ENCODE measurements at regions of chr12 and their contacts with region 1.

Region 1: GRCh38 chr12:122356192-122356635 is 66.3 kb downstream of the CLIP1 start:
- DNase-seq: peak; percentile 74
- ATAC-seq: peak; percentile 86
- H3K4me3 Mint-ChIP-seq: no peak overlapping the region
- H3K27ac Mint-ChIP-seq: no peak overlapping the region
- H3K4me1 Mint-ChIP-seq: peaks cover 16% of the 10 kb centered on the region
- H3K27me3 Mint-ChIP-seq: no peaks in the 10 kb centered on the region

Region 2: DNA sequence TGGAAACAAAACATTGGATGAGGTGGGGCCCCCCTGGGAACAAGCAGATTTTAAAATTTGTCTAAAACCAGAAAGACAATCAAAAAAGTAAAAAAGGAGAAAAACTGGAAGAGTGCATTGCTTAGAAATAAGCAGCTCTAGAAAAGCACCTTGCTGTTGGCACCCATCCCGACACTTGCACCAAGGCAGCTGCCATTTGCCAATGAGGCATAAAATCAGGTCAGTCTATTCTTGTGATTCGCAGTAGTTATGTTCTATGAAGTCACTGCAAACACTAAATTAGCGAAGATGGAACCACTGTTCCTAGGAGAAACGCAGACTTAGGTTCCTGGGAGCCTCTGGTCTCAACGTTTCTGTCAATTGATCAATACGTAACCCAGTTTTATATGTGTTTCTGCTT is 106.2 kb before region 1 on chr12:
- CTCF ChIA-PET with region 1: no interaction called
- POLR2A ChIA-PET with region 1: no interaction called
- DNase-seq: no peak
- ATAC-seq: no peak
- H3K4me3 Mint-ChIP-seq: no peak overlapping the region
- H3K27ac Mint-ChIP-seq: no peak overlapping the region
- H3K4me1 Mint-ChIP-seq: peaks cover 7% of the 10 kb centered on the region
- H3K27me3 Mint-ChIP-seq: no peaks in the 10 kb centered on the region

Region 3: DNA sequence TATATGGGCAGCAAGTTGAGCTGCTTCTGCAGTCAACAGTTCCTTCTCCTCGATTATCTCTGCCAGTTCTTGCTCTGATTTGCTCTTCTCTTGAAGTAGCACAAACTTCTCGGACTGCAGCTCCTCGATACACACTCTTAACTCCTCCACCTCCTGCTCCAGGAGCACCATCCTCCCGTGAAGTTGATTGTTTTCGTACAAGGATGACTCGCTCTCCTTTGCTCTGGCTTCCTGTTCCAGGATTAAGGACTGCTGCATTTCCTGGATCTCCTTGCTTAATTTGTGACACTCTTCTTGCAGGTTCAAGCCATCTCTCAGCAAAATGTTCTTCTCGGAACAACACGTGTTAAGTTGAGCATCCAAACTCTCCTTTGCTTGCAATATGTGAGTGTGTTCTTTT is 33.7 kb before region 1 on chr12:
- CTCF ChIA-PET with region 1: interaction called, 24 read pairs
- POLR2A ChIA-PET with region 1: no interaction called
- DNase-seq: no peak
- ATAC-seq: no peak
- H3K4me3 Mint-ChIP-seq: no peak overlapping the region
- H3K27ac Mint-ChIP-seq: no peak overlapping the region
- H3K4me1 Mint-ChIP-seq: peaks cover 16% of the 10 kb centered on the region
- H3K27me3 Mint-ChIP-seq: no peaks in the 10 kb centered on the region

Region 4: GRCh38 chr12:122336015-122336946 is 19.9 kb before region 1 on chr12:
- CTCF ChIA-PET with region 1: interaction called, 44 read pairs
- POLR2A ChIA-PET with region 1: no interaction called
- DNase-seq: peak; percentile 63
- ATAC-seq: peak; percentile 58
- H3K4me3 Mint-ChIP-seq: no peak overlapping the region
- H3K27ac Mint-ChIP-seq: peak overlapping the region; percentile 71
- H3K4me1 Mint-ChIP-seq: peaks cover 13% of the 10 kb centered on the region
- H3K27me3 Mint-ChIP-seq: no peaks in the 10 kb centered on the region

Region 5: DNA sequence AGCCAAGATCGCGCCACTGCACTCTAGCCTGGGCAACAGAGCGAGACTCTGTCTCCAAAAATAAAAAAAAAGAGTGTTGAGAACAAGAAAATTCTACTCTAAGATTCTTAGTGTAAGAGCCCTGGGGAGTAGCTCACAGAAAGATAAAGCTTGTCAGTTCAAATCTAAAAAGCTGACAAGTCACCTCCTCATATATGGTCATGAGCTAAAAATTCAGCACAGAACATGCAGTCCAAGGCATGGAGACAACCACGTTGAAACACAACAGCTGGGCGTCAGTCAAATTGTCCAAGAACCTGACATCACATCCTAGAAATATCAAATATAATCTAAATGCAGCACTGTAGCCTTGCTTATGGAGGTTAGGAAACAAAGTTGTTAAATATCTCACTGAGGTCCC is 18.5 kb after region 1 on chr12:
- CTCF ChIA-PET with region 1: interaction called, 19 read pairs
- POLR2A ChIA-PET with region 1: no interaction called
- DNase-seq: no peak
- ATAC-seq: no peak
- H3K4me3 Mint-ChIP-seq: no peak overlapping the region
- H3K27ac Mint-ChIP-seq: no peak overlapping the region
- H3K4me1 Mint-ChIP-seq: peaks cover 17% of the 10 kb centered on the region
- H3K27me3 Mint-ChIP-seq: no peaks in the 10 kb centered on the region

Region 6: GRCh38 chr12:122508163-122508562 is 151.9 kb after region 1 on chr12:
- CTCF ChIA-PET with region 1: no interaction called
- POLR2A ChIA-PET with region 1: no interaction called
- DNase-seq: no peak
- ATAC-seq: no peak
- H3K4me3 Mint-ChIP-seq: no peak overlapping the region
- H3K27ac Mint-ChIP-seq: no peak overlapping the region
- H3K4me1 Mint-ChIP-seq: peaks cover 5% of the 10 kb centered on the region
- H3K27me3 Mint-ChIP-seq: no peaks in the 10 kb centered on the region